Kidney (tissue), 22 donors: ENCODE measurements at regions of chr4 and their contacts with region 1.

Region 1: DNA sequence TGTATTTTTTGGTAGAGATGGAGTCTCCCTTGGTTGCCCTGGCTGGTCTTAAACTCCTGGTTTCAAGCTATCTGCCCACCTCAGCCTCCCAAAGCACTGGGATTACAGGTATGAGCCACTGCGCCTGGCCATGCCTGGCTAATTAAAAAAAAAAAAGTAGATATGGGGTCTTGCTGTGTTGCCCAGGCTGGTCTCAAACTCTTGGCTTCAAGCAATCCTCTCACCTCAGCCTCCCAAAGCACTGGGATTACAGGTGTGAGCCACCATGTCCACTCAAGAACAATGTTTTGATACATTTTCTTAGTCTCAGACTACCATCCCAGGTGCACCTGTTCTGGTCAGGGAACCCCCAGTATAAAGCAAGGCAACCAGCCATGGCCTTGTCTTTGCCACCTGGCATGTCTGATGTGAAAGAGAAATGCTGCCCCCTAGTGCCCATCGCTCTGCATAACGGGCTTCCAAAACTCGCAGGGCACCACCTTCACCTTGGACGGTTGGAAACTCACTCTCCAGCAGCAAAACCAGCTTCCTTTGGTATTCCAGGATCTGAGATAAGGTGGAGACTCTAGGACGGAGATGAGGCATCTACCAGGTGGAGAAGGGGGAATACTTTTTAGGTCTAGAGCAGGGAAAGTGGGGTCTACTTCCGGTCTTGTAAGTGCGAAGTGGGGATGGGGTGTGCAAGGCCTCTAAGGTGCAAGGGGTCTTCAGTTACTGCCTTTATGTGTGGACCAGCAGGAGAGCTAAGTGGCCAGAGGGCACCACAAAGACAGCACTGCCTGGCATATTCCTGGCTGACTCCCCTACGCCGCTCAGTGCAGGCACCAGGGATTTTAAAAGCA is 47.7 kb upstream of the AFAP1 start:
- DNase-seq: peak in 4 of 5 donors; percentile 78 to 86 (median 84)
- H3K4me3 ChIP-seq: no peak overlapping the region
- H3K27ac ChIP-seq: no peak overlapping the region
- H3K4me1 ChIP-seq: peaks cover 2 to 12% (median 9%) of the 10 kb centered on the region in 3 donors
- H3K27me3 ChIP-seq: no peaks in the 10 kb centered on the region
- CTCF ChIP-seq: peak; percentile 90

Region 2: DNA sequence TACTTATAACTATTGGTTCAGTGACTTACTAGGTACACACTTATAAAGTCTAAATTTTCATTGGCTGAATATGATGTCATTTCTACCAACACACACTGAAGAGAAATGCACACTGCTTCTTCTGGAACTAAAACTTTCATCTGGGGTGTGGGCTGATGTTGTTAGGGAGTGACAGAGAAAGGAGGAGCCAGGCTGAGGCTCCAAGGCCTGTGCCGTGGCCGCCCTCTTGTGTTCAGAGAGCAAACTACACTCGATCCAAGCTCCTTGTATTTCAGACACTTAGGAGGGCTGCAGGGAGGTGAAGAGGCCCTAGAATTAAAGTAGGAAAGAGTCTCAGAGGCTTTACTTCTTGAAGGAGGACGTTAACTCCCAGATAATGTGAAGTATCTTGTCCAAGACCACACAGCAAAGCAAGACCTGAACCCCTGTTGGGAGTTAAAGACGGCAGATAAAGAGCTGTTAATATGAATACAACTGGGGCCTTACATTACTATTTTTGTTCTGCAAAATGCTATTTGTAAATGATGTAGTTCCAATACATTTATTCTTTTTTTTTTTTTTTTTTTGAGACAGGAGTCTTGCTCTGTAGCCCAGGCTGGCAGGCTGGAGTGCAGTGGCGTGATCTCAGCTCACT is 185.2 kb before region 1 on chr4:
- intact Hi-C with region 1: loop called (anchors 10 kb)
- DNase-seq: peak in 4 of 5 donors; percentile 90 to 94 (median 91)
- H3K4me3 ChIP-seq: no peak overlapping the region
- H3K27ac ChIP-seq: no peak overlapping the region
- H3K4me1 ChIP-seq: peaks cover 14 to 25% (median 23%) of the 10 kb centered on the region in 3 donors
- H3K27me3 ChIP-seq: no peaks in the 10 kb centered on the region
- CTCF ChIP-seq: peak; percentile 85

Region 3: GRCh38 chr4:7861440-7861881 is 125.9 kb before region 1 on chr4:
- intact Hi-C with region 1: no loop called
- DNase-seq: peak in 2 of 5 donors; percentile 22 to 52
- H3K4me3 ChIP-seq: no peak overlapping the region
- H3K27ac ChIP-seq: no peak overlapping the region
- H3K4me1 ChIP-seq: peaks cover 0 to 5% (median 0%) of the 10 kb centered on the region in 3 donors
- H3K27me3 ChIP-seq: no peaks in the 10 kb centered on the region
- CTCF ChIP-seq: no peak

Region 4: GRCh38 chr4:7929118-7929951 is 58.0 kb before region 1 on chr4:
- intact Hi-C with region 1: no loop called
- DNase-seq: peak in 4 of 5 donors; percentile 43 to 82 (median 68)
- H3K4me3 ChIP-seq: no peak overlapping the region
- H3K27ac ChIP-seq: no peak overlapping the region
- H3K4me1 ChIP-seq: peaks cover under 1 to 3% (median 2%) of the 10 kb centered on the region in 3 donors
- H3K27me3 ChIP-seq: no peaks in the 10 kb centered on the region
- CTCF ChIP-seq: peak; percentile 33

Region 5: GRCh38 chr4:8260656-8261111 is 273.3 kb after region 1 on chr4:
- intact Hi-C with region 1: no loop called
- DNase-seq: peak in 3 of 5 donors; percentile 59 to 71 (median 67)
- H3K4me3 ChIP-seq: no peak overlapping the region
- H3K27ac ChIP-seq: no peak overlapping the region
- H3K4me1 ChIP-seq: no peaks in the 10 kb centered on the region
- H3K27me3 ChIP-seq: no peaks in the 10 kb centered on the region
- CTCF ChIP-seq: no peak